AG04449 (cell line): ENCODE measurements at regions of chr10 and their contacts with region 1.

Region 1: GRCh38 chr10:48656241-48656913 is 28.3 kb upstream of the WDFY4 start:
- DNase-seq: no peak
- H3K4me3 ChIP-seq: peak overlapping the region; percentile 62
- CTCF ChIP-seq: peak; percentile 100

Region 2: DNA sequence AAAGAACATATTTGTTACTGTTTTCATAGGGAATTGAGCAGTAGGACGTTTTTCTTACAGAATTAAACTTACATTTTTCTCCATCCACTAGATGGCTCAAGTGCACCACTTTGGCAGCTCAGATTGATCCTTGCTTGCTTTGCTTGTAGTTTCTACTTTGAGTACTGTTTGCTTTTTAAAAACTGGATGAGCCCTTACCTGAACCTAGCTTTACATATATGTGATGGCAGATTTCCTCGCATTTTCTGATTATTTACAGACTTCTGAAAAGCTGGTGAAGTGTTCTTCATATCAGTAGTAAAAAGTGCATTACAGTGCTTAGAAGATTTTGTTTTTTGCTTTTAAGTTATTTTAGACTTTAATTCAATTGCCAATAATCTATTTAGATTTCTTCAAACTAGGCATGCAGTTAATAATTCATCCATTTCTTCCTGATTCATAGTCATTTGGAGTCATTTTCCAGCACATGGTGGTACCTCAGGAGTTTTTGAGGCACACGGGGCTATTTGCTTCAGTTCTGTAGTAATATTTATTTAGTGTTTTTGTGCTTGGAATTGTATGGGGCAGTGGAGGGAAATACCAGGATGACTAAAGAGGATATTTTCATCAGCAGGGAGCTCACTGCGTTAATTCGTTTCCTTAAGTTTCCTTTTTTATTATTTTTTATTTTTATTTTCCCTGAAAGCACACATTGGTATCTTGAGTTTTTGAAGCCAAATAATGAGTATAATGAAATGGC is 292.6 kb before region 1 on chr10:
- CTCF ChIA-PET with region 1: interaction called, 215 read pairs
- POLR2A ChIA-PET with region 1: interaction called, 3 read pairs
- DNase-seq: no peak
- H3K4me3 ChIP-seq: no peak overlapping the region
- CTCF ChIP-seq: peak; percentile 55

Region 3: DNA sequence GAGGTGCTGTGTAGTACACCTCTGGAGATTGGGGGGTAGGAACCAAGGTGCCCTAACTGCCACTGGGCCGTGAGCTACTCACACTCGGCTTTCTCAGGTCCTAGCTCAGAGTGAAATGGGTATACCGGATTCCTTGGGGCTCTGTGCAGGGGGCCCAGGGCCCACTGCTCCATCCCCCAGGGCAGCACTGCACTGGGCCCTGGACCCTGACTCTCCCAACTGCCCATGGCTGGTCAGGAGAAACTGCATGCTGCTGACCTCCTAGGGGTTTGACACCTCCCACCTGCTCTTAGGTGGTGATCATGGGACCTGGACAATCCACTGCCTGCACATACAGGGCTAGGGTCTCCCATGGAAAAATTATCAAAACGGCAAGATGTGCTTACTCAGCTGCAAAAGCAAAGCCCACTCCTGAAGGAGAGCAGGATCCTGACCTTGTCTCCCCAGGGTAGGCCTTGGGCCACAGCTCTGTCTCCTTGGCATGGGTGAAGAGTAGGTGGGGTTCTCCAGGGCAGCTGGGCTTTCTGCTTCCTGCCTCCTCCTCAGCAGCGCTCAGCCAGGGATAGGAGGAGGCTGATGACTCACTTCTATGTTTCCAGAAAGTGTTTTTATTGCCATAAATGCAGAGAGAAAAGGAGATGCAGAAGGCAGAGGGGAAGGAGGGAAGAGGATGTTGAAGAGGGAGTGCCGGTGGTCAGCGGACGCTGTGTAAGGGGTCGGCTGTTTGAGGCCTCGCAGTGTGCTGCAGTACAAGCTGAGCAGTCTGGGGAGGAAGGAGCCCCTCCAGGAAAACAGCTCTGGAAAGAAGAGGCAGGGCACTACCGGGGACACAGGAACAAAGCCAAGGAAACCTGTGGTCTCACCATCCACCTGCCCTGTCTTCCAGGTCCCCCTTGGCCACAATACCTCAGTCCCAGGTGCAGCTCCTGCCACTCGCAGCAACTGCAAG is 159.3 kb before region 1 on chr10:
- CTCF ChIA-PET with region 1: interaction called, 29 read pairs
- POLR2A ChIA-PET with region 1: no interaction called
- DNase-seq: peak; percentile 10
- H3K4me3 ChIP-seq: no peak overlapping the region
- CTCF ChIP-seq: no peak

Region 4: GRCh38 chr10:48551861-48552591 is 104.4 kb before region 1 on chr10:
- CTCF ChIA-PET with region 1: interaction called, 1,051 read pairs
- POLR2A ChIA-PET with region 1: interaction called, 4 read pairs
- DNase-seq: no peak
- H3K4me3 ChIP-seq: no peak overlapping the region
- CTCF ChIP-seq: peak; percentile 68

Region 5: DNA sequence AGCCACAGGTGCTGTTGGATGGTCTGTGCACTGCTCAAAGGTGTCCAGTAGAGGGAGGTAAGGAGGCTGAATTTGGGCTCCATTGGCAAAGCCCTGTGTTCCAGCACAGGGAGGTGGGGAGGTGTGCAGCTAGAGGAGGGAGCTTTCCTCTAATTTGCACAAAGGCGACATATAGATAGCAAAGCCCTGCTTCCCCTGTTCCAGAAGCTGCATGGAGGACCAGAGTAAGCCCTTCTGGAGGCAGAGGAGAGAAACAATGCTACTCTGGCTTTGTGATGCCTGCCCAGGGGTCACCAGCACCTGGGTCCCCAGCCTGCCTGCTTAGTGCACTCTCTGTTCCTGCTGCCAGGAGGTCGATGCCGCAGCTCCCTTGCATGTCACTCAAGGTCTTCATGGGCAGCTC is 48.1 kb before region 1 on chr10:
- CTCF ChIA-PET with region 1: interaction called, 124 read pairs
- POLR2A ChIA-PET with region 1: interaction called, 10 read pairs
- DNase-seq: no peak
- H3K4me3 ChIP-seq: no peak overlapping the region
- CTCF ChIP-seq: peak; percentile 77

Region 6: GRCh38 chr10:48670978-48671913 is 14.9 kb after region 1 on chr10:
- CTCF ChIA-PET with region 1: interaction called, 28 read pairs
- POLR2A ChIA-PET with region 1: no interaction called
- DNase-seq: no peak
- H3K4me3 ChIP-seq: no peak overlapping the region; the same call in 1 of the 2 replicates
- CTCF ChIP-seq: no peak

Region 7: GRCh38 chr10:48773580-48773979 is 117.2 kb after region 1 on chr10:
- CTCF ChIA-PET with region 1: no interaction called
- POLR2A ChIA-PET with region 1: no interaction called
- DNase-seq: no peak
- H3K4me3 ChIP-seq: no peak overlapping the region
- CTCF ChIP-seq: no peak